CD8-positive, alpha-beta T cell (primary cell): ENCODE measurements at regions of chr13 and their contacts with region 1.

Region 1: DNA sequence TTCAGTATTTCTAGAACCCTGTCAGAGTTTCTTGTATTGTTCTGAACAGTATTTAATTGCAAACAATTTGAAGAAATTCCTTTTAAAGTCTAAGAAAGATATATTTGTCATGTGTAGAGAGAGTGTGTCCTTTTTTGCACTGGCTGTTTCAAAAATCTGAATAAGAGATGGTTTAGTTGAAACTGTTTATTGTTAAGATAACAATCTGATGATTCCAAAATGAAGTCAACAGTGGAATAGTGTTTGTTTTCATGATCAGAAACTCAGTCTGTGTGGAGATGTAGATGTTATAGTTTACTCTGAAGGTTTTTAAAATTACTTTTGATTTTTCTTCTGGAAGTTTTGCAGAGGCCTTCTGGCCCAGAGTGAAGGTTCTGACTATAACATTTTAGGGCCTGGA is 128.8 kb upstream of the RFC3 start:
- DNase-seq: no peak
- ATAC-seq: no peak
- H3K4me3 ChIP-seq: no peak overlapping the region
- H3K4me3 Mint-ChIP-seq: no peak overlapping the region
- H3K27ac ChIP-seq: no peak overlapping the region
- H3K27ac Mint-ChIP-seq: no peak overlapping the region
- H3K4me1 ChIP-seq: no peaks in the 10 kb centered on the region
- H3K4me1 Mint-ChIP-seq: no peaks in the 10 kb centered on the region
- H3K27me3 ChIP-seq: no peaks in the 10 kb centered on the region
- H3K27me3 Mint-ChIP-seq: no peaks in the 10 kb centered on the region
- CTCF ChIP-seq: no peak

Region 2: GRCh38 chr13:33379304-33379981 is 309.7 kb before region 1 on chr13:
- CTCF ChIA-PET with region 1: no interaction called
- POLR2A ChIA-PET with region 1: no interaction called
- intact Hi-C with region 1: no loop called
- DNase-seq: no peak
- ATAC-seq: no peak
- H3K4me3 ChIP-seq: no peak overlapping the region
- H3K4me3 Mint-ChIP-seq: no peak overlapping the region
- H3K27ac ChIP-seq: no peak overlapping the region
- H3K27ac Mint-ChIP-seq: no peak overlapping the region
- H3K4me1 ChIP-seq: no peaks in the 10 kb centered on the region
- H3K4me1 Mint-ChIP-seq: no peaks in the 10 kb centered on the region
- H3K27me3 ChIP-seq: no peaks in the 10 kb centered on the region
- H3K27me3 Mint-ChIP-seq: peaks cover 5% of the 10 kb centered on the region
- CTCF ChIP-seq: no peak

Region 3: GRCh38 chr13:34430294-34430693 is 741.2 kb after region 1 on chr13:
- CTCF ChIA-PET with region 1: no interaction called
- POLR2A ChIA-PET with region 1: interaction called, 10 read pairs
- intact Hi-C with region 1: no loop called
- DNase-seq: no peak
- ATAC-seq: no peak
- H3K4me3 ChIP-seq: no peak overlapping the region
- H3K4me3 Mint-ChIP-seq: no peak overlapping the region
- H3K27ac ChIP-seq: no peak overlapping the region
- H3K27ac Mint-ChIP-seq: no peak overlapping the region
- H3K4me1 ChIP-seq: no peaks in the 10 kb centered on the region
- H3K4me1 Mint-ChIP-seq: no peaks in the 10 kb centered on the region
- H3K27me3 ChIP-seq: no peaks in the 10 kb centered on the region
- H3K27me3 Mint-ChIP-seq: no peaks in the 10 kb centered on the region
- CTCF ChIP-seq: no peak